CD8-positive, alpha-beta T cell (primary cell): ENCODE measurements at regions of chr2 and their contacts with region 1.

Region 1: DNA sequence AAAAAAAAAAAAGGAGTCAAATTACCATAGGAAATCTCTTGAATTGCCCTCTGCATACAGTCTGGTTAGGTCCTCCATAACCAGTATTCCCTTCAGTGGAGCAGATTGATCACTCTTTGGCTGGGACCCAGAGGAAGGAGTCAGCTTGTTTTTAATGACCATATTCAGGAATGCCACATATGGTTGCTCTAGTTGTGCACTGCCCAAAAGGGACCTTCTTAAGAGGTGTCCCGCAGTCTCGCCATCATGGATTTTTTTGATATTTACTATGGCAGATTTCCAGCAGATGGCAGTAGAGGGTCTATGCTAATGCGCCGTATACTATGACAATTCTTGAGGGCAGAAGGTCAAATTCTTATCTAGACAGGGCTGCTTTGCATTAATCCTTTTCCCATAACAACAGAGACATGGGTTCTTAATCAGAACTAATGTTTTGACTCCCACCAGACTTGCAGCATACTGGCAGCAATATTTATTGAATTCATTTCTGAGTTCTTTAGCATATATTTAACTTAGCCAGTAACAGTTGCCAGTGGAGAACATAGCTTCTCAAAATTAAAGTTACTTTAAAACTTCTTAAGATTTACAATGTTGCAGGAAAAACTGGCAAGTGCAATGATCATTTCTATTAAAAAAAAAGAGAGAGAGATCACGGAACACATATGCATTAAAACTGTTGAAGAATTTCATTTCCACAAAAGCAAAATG is 31.8 kb upstream of the INPP4A start:
- DNase-seq: peak; percentile 25 to 85 (median 54)
- ATAC-seq: peak; percentile 85
- H3K4me3 ChIP-seq: no peak overlapping the region
- H3K4me3 Mint-ChIP-seq: no peak overlapping the region
- H3K27ac ChIP-seq: no peak overlapping the region
- H3K27ac Mint-ChIP-seq: no peak overlapping the region
- H3K4me1 ChIP-seq: peaks cover 5% of the 10 kb centered on the region
- H3K4me1 Mint-ChIP-seq: peaks cover 12% of the 10 kb centered on the region
- H3K27me3 ChIP-seq: no peaks in the 10 kb centered on the region
- H3K27me3 Mint-ChIP-seq: no peaks in the 10 kb centered on the region
- CTCF ChIP-seq: peak; percentile 91

Region 2: DNA sequence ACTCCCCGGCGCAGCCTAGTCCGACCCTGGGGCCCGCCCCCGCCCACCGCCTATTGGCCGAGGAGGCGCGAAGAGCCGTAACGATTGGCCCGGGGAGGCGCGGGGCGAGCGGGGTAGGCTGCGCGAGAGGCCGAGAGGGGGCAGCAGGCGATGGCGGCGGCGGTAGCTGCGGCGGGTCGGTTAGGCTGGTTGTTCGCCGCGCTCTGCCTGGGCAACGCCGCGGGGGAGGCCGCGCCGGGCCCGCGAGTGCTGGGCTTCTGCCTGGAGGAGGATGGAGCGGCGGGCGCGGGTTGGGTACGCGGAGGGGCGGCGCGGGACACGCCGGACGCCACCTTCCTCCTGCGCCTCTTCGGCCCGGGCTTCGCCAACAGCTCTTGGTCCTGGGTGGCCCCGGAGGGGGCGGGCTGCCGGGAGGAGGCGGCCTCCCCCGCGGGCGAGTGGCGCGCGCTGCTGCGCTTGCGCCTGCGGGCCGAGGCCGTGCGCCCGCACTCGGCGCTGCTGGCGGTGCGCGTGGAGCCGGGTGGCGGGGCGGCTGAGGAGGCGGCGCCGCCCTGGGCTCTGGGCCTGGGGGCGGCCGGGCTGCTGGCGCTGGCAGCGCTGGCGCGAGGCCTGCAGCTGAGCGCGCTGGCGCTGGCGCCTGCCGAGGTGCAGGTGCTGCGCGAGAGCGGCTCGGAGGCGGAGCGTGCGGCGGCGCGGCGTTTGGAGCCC is 1596.6 kb before region 1 on chr2 and contains the start of gene CNNM3:
- CTCF ChIA-PET with region 1: no interaction called
- POLR2A ChIA-PET with region 1: no interaction called
- intact Hi-C with region 1: no loop called
- DNase-seq: peak; percentile 90 to 98 (median 96)
- ATAC-seq: peak; percentile 92
- H3K4me3 ChIP-seq: peak within 1 kb of the TSS; percentile 70 to 83
- H3K4me3 Mint-ChIP-seq: peak within 1 kb of the TSS; percentile 87
- H3K27ac ChIP-seq: peak within 1 kb of the TSS; percentile 57 to 70
- H3K27ac Mint-ChIP-seq: peak within 1 kb of the TSS; percentile 90
- H3K4me1 ChIP-seq: peaks cover 48% of the 10 kb centered on the region
- H3K4me1 Mint-ChIP-seq: peaks cover 63% of the 10 kb centered on the region
- H3K27me3 ChIP-seq: no peaks in the 10 kb centered on the region
- H3K27me3 Mint-ChIP-seq: no peaks in the 10 kb centered on the region
- CTCF ChIP-seq: peak; percentile 63
- total RNA-seq, gene CNNM3: 40.1 to 41.8 TPM

Region 3: DNA sequence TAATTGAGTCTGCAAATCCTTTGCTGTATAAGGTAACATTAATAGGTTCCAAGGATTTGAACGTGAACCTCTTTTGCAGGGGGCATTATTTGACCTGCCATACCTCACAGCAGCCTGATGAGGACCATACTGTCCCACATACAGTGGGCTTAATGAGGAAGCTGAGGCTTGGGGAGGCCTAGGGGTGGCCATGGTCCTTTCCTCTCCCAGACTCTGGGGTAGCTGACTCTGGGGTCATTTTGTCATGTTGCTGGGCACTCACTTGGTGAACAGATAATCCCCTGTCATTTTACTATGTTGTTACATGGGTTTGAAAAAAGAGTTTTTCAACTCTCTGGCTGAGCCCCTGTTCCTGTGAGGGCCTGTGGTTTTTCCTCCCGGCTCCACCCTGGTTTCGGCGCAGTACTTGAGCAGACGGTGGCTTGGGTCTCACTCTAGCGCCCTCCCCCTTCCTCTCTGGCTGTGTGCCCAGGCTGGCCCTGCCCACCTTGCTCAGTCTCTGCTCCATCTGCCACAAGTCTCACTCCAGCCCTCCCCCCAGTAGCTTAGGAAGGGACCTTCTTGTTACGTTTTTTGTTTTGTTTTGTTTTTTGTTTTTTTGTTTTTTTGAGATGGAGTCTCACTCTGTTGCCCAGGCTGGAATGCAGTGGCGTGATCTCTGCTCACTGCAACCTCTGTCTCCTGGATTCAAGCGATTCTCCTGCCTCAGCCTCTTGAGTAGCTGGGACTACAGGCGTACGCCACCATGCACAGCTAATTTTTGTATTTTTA is 52.7 kb after region 1 on chr2:
- CTCF ChIA-PET with region 1: interaction called, 20 read pairs
- POLR2A ChIA-PET with region 1: no interaction called
- intact Hi-C with region 1: no loop called
- DNase-seq: peak; percentile 61 to 94 (median 90)
- ATAC-seq: peak; percentile 69
- H3K4me3 ChIP-seq: peak overlapping the region; percentile 39 to 45
- H3K4me3 Mint-ChIP-seq: peak overlapping the region; percentile 86
- H3K27ac ChIP-seq: peak overlapping the region; percentile 59 to 86
- H3K27ac Mint-ChIP-seq: peak overlapping the region; percentile 97
- H3K4me1 ChIP-seq: peaks cover 88% of the 10 kb centered on the region
- H3K4me1 Mint-ChIP-seq: peaks cover 88% of the 10 kb centered on the region
- H3K27me3 ChIP-seq: no peaks in the 10 kb centered on the region
- H3K27me3 Mint-ChIP-seq: no peaks in the 10 kb centered on the region
- CTCF ChIP-seq: no peak

Region 4: DNA sequence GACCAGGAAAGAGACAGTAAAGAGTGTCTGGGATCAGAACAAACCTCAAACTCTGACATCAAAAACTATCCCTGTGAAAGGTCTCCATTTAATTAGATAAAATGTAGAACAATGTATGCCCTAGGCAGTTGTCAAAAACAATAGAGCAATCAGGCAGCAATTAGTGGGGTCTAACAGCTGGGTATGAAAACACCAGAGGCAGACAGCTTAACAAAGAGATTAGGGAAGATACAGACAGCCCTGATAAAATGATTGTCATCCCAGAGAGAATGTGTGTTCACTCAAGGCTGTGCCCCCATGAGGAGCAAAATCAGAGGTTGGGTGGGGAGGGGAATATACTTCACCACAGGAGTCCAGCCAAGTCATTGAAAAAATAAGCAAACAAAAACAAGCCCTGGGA is 81.8 kb after region 1 on chr2:
- CTCF ChIA-PET with region 1: interaction called, 10 read pairs
- POLR2A ChIA-PET with region 1: no interaction called
- intact Hi-C with region 1: no loop called
- DNase-seq: no peak
- ATAC-seq: no peak
- H3K4me3 ChIP-seq: no peak overlapping the region
- H3K4me3 Mint-ChIP-seq: no peak overlapping the region
- H3K27ac ChIP-seq: peak overlapping the region in 1 of 2 experiments; percentile 15
- H3K27ac Mint-ChIP-seq: peak overlapping the region; percentile 46
- H3K4me1 ChIP-seq: peaks cover 38% of the 10 kb centered on the region
- H3K4me1 Mint-ChIP-seq: peaks cover 69% of the 10 kb centered on the region
- H3K27me3 ChIP-seq: no peaks in the 10 kb centered on the region
- H3K27me3 Mint-ChIP-seq: no peaks in the 10 kb centered on the region
- CTCF ChIP-seq: no peak

Region 5: DNA sequence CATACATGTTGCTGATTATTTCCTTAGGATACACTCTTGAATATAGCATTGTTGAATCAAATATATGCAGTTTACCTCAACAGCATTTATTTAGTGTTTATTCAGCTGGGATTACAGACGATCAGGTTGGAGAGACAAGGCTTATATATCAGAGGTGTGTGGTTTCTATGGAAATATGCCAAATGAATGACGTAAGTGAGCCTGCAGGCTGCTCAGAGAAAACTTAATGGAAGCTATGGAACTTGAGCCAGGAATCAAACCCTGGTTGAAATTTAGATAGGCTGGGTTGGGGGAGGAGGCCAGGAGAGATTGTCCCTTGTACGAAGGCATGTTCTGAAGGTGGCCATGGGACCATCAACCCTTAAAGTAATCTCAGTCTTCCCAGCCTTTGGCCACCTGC is 111.3 kb after region 1 on chr2:
- CTCF ChIA-PET with region 1: interaction called, 70 read pairs
- POLR2A ChIA-PET with region 1: no interaction called
- intact Hi-C with region 1: no loop called
- DNase-seq: no peak
- ATAC-seq: no peak
- H3K4me3 ChIP-seq: no peak overlapping the region
- H3K4me3 Mint-ChIP-seq: no peak overlapping the region
- H3K27ac ChIP-seq: no peak overlapping the region
- H3K27ac Mint-ChIP-seq: peak overlapping the region; percentile 23
- H3K4me1 ChIP-seq: no peaks in the 10 kb centered on the region
- H3K4me1 Mint-ChIP-seq: peaks cover 10% of the 10 kb centered on the region
- H3K27me3 ChIP-seq: no peaks in the 10 kb centered on the region
- H3K27me3 Mint-ChIP-seq: no peaks in the 10 kb centered on the region
- CTCF ChIP-seq: no peak

Region 6: DNA sequence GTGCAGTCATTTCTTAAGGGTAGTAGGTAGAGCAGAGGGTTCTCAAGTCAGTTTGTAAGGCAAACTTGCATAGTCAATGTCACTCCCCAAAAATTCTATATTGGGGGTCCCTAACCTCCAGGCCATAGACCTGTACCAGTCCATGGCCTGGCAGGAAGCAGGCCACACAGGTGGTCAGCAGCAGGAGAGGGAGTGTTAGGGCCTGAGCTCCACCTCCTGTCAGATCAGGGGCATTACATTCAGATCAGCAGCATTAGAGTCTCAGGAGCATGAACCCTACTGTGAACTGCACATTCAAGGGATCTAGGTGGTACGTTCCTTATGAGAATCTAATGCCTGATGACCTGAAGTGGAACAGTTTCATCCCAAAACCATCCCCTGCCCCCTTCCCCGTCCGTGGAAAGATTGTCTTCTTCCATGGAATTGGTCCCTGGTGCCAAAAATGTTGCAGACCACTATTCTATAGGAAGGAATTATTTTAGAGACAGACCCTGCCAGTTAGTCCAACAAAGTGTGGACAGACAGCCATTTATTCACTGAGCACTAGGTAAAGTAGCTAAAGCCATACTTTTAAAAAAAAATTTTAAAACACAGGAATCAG is 188.7 kb after region 1 on chr2:
- CTCF ChIA-PET with region 1: interaction called, 6 read pairs
- POLR2A ChIA-PET with region 1: no interaction called
- intact Hi-C with region 1: loop called in 1 of 2 experiments (anchors 1 kb)
- DNase-seq: peak in 2 of 9 experiments; percentile 25 to 46
- ATAC-seq: peak; percentile 36
- H3K4me3 ChIP-seq: no peak overlapping the region
- H3K4me3 Mint-ChIP-seq: no peak overlapping the region
- H3K27ac ChIP-seq: no peak overlapping the region
- H3K27ac Mint-ChIP-seq: peak overlapping the region; percentile 37
- H3K4me1 ChIP-seq: peaks cover 12% of the 10 kb centered on the region
- H3K4me1 Mint-ChIP-seq: peaks cover 31% of the 10 kb centered on the region
- H3K27me3 ChIP-seq: no peaks in the 10 kb centered on the region
- H3K27me3 Mint-ChIP-seq: no peaks in the 10 kb centered on the region
- CTCF ChIP-seq: peak; percentile 41